ENCODE measurements at regions of chr1 and their contacts with region 1.

Region 1: DNA sequence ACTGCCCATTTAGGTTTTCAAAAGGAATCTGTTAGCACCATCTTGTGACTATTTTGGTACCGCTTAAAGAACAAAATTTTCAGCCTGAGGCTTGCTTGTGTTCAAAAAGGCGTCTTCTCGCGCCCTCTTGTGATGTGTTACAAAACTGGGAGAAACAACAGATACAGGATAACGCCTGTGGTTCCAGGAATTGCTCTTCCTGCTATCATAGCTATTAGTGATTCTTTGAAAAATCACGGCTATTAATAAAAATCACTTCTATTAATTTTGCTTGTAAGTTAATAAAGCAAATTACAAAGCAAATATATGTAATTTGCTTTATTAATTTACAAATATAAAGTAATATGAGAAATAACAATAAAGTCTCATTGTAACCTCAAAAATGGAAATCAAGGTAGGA is 82.2 kb upstream of the ABCD3 start:
- DNase-seq: peak; percentile 74 to 79
- H3K4me3 ChIP-seq: no peak overlapping the region
- H3K4me3 Mint-ChIP-seq: no peak overlapping the region
- H3K27ac Mint-ChIP-seq: no peak overlapping the region
- H3K4me1 ChIP-seq: peaks cover 65% of the 10 kb centered on the region
- H3K4me1 Mint-ChIP-seq: peaks cover 25% of the 10 kb centered on the region
- H3K27me3 ChIP-seq: no peaks in the 10 kb centered on the region
- H3K27me3 Mint-ChIP-seq: no peaks in the 10 kb centered on the region
- CTCF ChIP-seq: peak; percentile 57 to 68

Region 2: DNA sequence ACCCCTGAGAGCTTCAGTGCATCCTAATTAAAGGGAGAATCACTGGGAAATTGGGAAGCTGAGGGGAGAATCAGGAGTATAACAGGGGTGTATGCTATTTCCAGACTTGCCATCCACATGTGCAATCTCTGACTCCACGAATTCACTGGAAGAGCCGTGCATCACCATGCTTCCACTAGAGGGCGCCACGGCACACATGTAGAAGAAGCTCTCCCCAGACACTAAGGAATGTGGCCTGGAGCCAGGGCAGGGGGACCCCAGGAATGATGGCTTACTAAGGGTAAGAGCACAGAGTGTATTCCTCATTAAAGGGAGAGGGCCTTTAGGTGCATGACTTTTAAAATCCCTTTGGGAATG is 296.5 kb before region 1 on chr1:
- CTCF ChIA-PET with region 1: interaction called, 49 read pairs
- POLR2A ChIA-PET with region 1: no interaction called
- intact Hi-C with region 1: no loop called
- DNase-seq: peak; percentile 66 to 69
- H3K4me3 ChIP-seq: no peak overlapping the region
- H3K4me3 Mint-ChIP-seq: no peak overlapping the region
- H3K27ac Mint-ChIP-seq: no peak overlapping the region
- H3K4me1 ChIP-seq: 0 out of 2 replicates have a peak, but pooled peaks cover 5% of the 10 kb centered on the region
- H3K4me1 Mint-ChIP-seq: peaks cover 6% of the 10 kb centered on the region
- H3K27me3 ChIP-seq: no peaks in the 10 kb centered on the region
- H3K27me3 Mint-ChIP-seq: no peaks in the 10 kb centered on the region
- CTCF ChIP-seq: peak; percentile 78 to 81

Region 3: DNA sequence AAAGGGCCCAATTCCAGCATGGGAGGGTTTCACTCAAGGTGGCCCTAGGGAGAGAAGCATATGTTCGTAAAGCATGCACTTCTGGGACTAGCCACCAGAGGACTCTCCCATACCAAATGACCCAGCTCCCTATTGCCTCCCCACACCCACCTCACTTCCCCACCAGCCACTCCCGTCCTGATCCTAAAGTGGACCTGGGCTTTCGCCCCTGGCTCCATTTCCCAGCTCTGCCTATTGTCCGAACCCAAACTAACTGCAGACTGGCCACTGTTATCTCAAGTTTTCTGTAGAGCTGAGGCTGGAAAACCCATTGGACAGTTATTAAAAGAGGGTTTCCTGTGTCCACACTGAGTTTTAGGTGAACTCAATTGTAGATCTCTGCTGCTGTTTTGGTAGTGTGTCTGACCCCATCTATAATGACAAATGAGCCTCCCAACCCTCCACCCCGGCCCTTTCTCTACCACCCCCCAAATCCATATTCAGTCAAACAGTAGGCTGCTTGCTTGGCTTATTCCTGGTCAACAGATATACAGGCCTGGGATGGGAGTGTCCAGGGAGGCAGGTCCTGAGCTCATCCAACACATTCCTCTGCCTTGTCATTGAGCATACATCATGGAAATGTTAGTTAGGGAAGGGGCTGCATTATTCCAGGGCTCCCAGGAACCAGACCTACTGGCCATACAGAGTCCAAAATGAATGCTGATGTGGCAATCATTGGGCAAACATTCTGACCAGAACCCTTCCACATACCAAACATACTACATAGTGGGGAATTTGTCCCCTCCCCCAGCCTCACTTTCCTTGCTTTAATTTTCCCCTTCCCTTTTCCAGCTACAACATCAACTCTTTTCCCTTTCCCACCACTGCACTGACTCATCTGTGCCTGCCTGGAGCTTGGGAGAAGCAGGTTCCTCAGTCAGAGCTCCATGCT is 274.2 kb before region 1 on chr1:
- CTCF ChIA-PET with region 1: interaction called, 36 read pairs
- POLR2A ChIA-PET with region 1: no interaction called
- intact Hi-C with region 1: loop called (anchors 1 kb)
- DNase-seq: peak; percentile 81 to 86
- H3K4me3 ChIP-seq: no peak overlapping the region
- H3K4me3 Mint-ChIP-seq: no peak overlapping the region
- H3K27ac Mint-ChIP-seq: peak overlapping the region; percentile 28
- H3K4me1 ChIP-seq: peaks cover 32% of the 10 kb centered on the region
- H3K4me1 Mint-ChIP-seq: peaks cover 22% of the 10 kb centered on the region
- H3K27me3 ChIP-seq: no peaks in the 10 kb centered on the region
- H3K27me3 Mint-ChIP-seq: no peaks in the 10 kb centered on the region
- CTCF ChIP-seq: peak; percentile 72

Region 4: GRCh38 chr1:94160811-94161210 is 175.1 kb before region 1 on chr1:
- CTCF ChIA-PET with region 1: no interaction called
- POLR2A ChIA-PET with region 1: no interaction called
- intact Hi-C with region 1: loop called (anchors 10 kb)
- DNase-seq: no peak
- H3K4me3 ChIP-seq: no peak overlapping the region
- H3K4me3 Mint-ChIP-seq: no peak overlapping the region
- H3K27ac Mint-ChIP-seq: peak overlapping the region; percentile 52
- H3K4me1 ChIP-seq: peaks cover 4% of the 10 kb centered on the region; the same call in 1 of the 2 replicates
- H3K4me1 Mint-ChIP-seq: peaks cover 7% of the 10 kb centered on the region
- H3K27me3 ChIP-seq: no peaks in the 10 kb centered on the region
- H3K27me3 Mint-ChIP-seq: no peaks in the 10 kb centered on the region
- CTCF ChIP-seq: no peak

Region 5: DNA sequence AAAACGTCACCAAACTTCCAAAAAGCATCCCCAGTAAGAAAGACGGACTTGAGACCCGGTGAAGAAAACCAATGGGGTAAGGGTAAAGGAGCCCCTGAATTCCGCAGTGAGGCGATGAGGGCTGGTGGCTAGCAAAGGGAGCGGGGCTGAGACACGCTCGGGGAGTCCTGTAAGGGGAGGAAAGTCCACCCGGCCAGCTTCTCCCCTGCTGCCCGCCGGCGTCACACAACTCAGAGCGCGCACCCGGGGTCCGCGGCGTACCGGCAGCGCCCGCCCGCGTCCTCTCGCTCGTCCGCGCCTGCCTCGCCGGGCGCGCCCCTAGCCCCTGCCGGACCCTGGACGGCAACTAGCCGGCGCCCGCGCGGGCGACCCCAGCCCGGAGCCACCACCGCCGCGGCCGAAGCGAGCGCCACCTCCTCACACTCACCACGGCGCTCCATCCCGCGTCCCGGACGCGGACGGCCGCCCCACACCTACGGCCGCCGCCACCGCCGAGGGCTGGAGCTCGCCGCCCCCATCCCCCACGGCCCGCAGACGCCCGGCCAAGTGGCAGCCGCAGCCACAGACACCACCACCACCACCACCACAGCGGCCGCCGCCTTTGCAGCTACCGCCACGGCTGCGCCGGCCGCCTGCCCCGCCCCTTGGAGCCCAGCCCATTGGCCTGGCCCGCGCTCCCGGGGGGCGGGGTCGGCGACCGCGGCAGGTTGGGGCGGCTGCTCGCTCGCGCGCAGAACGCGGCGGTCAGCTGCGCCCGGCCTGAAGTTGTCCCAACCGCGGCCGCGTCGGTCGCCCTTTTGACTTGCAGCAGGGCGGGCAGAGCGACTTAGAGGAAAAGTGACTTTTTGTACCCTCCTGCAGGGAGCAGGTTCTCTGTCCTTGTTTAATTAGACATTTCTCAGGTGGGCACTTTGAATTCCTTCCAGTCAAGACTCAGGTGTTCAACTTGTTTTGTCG is 88.5 kb before region 1 on chr1:
- CTCF ChIA-PET with region 1: interaction called, 5 read pairs
- POLR2A ChIA-PET with region 1: no interaction called
- intact Hi-C with region 1: loop called (anchors 1 kb)
- DNase-seq: peak; percentile 82 to 92
- H3K4me3 ChIP-seq: peak overlapping the region; percentile 58
- H3K4me3 Mint-ChIP-seq: peak overlapping the region; percentile 98
- H3K27ac Mint-ChIP-seq: peak overlapping the region; percentile 85
- H3K4me1 ChIP-seq: peaks cover 27% of the 10 kb centered on the region; the same call in 1 of the 2 replicates
- H3K4me1 Mint-ChIP-seq: peaks cover 26% of the 10 kb centered on the region
- H3K27me3 ChIP-seq: no peaks in the 10 kb centered on the region
- H3K27me3 Mint-ChIP-seq: no peaks in the 10 kb centered on the region
- CTCF ChIP-seq: no peak

Region 6: GRCh38 chr1:94270801-94271203 is 65.1 kb before region 1 on chr1:
- CTCF ChIA-PET with region 1: no interaction called
- POLR2A ChIA-PET with region 1: no interaction called
- intact Hi-C with region 1: no loop called
- DNase-seq: no peak
- H3K4me3 ChIP-seq: no peak overlapping the region
- H3K4me3 Mint-ChIP-seq: no peak overlapping the region
- H3K27ac Mint-ChIP-seq: no peak overlapping the region
- H3K4me1 ChIP-seq: no peaks in the 10 kb centered on the region
- H3K4me1 Mint-ChIP-seq: peaks cover 6% of the 10 kb centered on the region
- H3K27me3 ChIP-seq: no peaks in the 10 kb centered on the region
- H3K27me3 Mint-ChIP-seq: no peaks in the 10 kb centered on the region
- CTCF ChIP-seq: no peak

Region 7: DNA sequence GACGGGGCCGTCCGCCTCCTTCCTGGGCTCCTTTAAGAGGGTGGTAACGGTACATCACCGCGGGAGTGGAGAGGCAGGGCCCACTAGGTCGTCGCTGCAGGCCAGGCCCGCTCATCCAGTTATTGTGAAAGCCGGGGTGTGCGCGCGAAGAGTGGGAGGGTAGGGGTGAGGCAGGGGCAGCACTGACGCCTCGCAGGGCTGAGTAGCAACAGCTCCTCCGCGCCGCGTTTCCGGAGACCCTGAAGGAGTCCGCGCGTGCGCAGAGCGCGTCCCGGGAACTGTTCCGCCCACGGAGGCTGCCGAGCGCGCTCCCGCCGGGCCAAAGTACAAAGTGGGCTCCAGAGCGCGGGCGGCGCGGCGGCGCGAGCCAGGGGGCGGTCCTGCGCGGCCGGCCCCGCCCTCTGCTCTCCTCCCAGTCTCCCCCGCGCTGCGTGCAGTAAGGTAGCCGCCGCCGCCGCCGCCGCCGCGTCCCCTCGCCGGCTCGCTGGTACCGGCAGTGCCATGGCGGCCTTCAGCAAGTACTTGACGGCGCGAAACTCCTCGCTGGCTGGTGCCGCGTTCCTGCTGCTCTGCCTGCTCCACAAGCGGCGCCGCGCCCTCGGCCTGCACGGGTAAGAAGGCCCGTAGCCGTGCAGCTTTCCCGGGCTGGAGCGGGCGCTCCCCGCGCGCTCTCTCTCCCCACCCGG is 82.2 kb after region 1 on chr1 and contains the start of gene ABCD3:
- CTCF ChIA-PET with region 1: interaction called, 5 read pairs
- POLR2A ChIA-PET with region 1: no interaction called
- intact Hi-C with region 1: loop called (anchors 1 kb)
- DNase-seq: peak; percentile 95
- H3K4me3 ChIP-seq: peak within 1 kb of the TSS; percentile 87
- H3K4me3 Mint-ChIP-seq: no peak within 1 kb of the TSS
- H3K27ac Mint-ChIP-seq: peak within 1 kb of the TSS; percentile 74
- H3K4me1 ChIP-seq: peaks cover 27% of the 10 kb centered on the region
- H3K4me1 Mint-ChIP-seq: peaks cover 15% of the 10 kb centered on the region
- H3K27me3 ChIP-seq: no peaks in the 10 kb centered on the region
- H3K27me3 Mint-ChIP-seq: no peaks in the 10 kb centered on the region
- CTCF ChIP-seq: no peak
- total RNA-seq, gene ABCD3: 93.4 and 94.4 TPM in 2 replicates